ENCODE measurements at regions of chr14 and their contacts with region 1.

Region 1: DNA sequence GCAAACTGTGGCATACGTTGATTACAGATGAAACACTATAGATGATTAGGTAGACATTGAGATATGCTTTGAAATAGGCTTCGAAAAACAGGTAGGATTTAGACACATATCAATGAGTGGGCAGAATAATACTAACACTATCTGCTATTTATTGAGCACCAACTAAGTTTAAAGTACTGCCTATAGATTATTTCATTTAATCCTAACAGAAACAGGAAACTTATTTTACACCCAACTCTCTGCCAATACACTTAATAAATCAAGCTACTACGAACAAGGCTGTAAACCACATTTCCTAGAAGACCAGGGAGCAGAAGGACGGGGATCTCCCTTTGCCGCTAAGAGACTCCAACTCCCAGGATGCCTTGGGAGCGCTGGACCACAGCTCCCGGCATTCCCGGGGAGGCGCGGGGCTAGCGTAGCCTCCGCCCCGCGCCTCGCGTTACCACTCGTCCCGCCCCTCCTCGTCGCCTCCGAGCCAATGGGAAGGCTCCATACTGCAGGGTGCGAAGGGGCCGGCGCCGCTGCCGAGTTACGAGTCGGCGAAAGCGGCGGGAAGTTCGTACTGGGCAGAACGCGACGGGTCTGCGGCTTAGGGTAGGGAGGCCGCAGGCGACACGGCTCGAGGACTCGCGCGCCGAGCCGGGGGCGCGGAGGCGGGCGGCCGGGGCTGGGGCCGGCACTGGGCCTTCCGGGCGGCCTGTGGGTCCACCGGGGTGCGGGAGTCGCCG is at the start of gene VRK1:
- DNase-seq: peak; percentile 92
- ATAC-seq: peak; percentile 98
- H3K4me3 Mint-ChIP-seq: peak within 1 kb of the TSS; percentile 87
- H3K27ac Mint-ChIP-seq: peak within 1 kb of the TSS; percentile 74
- H3K4me1 Mint-ChIP-seq: peaks cover 24% of the 10 kb centered on the region
- H3K27me3 Mint-ChIP-seq: peaks cover 18% of the 10 kb centered on the region
- CTCF ChIP-seq: no peak
- total RNA-seq, gene VRK1: 30.2 and 32.1 TPM in 2 replicates

Region 2: DNA sequence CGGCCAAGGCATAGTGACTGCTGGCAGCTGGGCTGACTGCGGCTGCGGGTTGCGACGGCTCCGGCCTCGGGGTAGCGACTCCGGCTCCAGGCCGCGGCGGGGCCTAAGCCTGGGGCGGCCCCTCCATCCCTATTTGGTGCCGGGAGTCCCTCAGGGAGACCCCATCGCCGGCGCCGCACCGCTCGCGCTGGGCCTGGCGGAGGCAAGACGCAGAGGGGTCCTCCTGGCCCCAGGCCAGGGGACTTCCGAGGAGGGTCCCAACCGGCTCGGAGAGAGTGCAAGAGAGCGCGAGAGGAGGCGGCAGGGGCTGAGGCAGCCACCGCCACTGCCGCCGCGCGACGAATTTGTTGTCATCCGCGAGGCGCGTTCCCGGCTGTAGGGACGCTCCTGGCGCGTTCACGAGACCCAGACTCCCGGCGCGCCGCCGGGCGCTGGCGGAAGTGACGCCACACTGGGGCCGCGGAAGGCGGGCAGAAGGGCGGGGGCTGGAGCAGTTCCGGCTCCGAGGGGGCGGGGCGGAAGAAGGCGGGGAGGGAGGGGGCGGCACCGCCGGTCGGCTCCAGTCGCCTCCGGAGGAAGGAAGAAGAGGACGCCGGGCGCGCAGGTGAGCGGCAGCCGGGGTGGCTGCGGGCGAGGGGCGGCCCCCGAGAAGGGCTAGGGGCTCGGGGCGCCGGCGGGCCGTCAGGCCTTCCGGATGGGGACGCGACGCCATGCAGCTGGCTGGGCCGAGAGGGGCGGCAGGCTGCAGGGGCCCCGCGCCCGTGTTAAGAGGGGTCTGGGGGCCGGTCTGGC is 433.9 kb before region 1 on chr14 and contains the starts of genes ATG2B and GSKIP:
- CTCF ChIA-PET with region 1: no interaction called
- POLR2A ChIA-PET with region 1: no interaction called
- intact Hi-C with region 1: loop called (anchors 1 kb)
- DNase-seq: peak; percentile 97
- ATAC-seq: peak; percentile 85
- H3K4me3 Mint-ChIP-seq: peak within 1 kb of the TSS; percentile 89
- H3K27ac Mint-ChIP-seq: peak within 1 kb of the TSS; percentile 63
- H3K4me1 Mint-ChIP-seq: peaks cover 40% of the 10 kb centered on the region
- H3K27me3 Mint-ChIP-seq: no peaks in the 10 kb centered on the region
- CTCF ChIP-seq: no peak
- total RNA-seq, gene ATG2B: 19.4 and 21.0 TPM in 2 replicates
- total RNA-seq, gene GSKIP: 11.4 and 15.3 TPM in 2 replicates

Region 3: GRCh38 chr14:96391293-96392118 is 405.5 kb before region 1 on chr14:
- CTCF ChIA-PET with region 1: no interaction called
- POLR2A ChIA-PET with region 1: no interaction called
- intact Hi-C with region 1: loop called (anchors 1 kb)
- DNase-seq: peak; percentile 100
- ATAC-seq: peak; percentile 93
- H3K4me3 Mint-ChIP-seq: peak overlapping the region; percentile 91
- H3K27ac Mint-ChIP-seq: peak overlapping the region; percentile 88
- H3K4me1 Mint-ChIP-seq: peaks cover 6% of the 10 kb centered on the region
- H3K27me3 Mint-ChIP-seq: peaks cover 3% of the 10 kb centered on the region
- CTCF ChIP-seq: no peak

Region 4: GRCh38 chr14:96598332-96598928 is 198.6 kb before region 1 on chr14:
- CTCF ChIA-PET with region 1: no interaction called
- POLR2A ChIA-PET with region 1: no interaction called
- intact Hi-C with region 1: no loop called
- DNase-seq: no peak
- ATAC-seq: no peak
- H3K4me3 Mint-ChIP-seq: no peak overlapping the region
- H3K27ac Mint-ChIP-seq: no peak overlapping the region
- H3K4me1 Mint-ChIP-seq: no peaks in the 10 kb centered on the region
- H3K27me3 Mint-ChIP-seq: peaks cover 16% of the 10 kb centered on the region
- CTCF ChIP-seq: no peak

Region 5: GRCh38 chr14:96762650-96763049 is 34.4 kb before region 1 on chr14:
- CTCF ChIA-PET with region 1: no interaction called
- POLR2A ChIA-PET with region 1: interaction called, 3 read pairs
- intact Hi-C with region 1: loop called (anchors 1 kb)
- DNase-seq: no peak
- ATAC-seq: peak; percentile 97
- H3K4me3 Mint-ChIP-seq: peak overlapping the region; percentile 69
- H3K27ac Mint-ChIP-seq: no peak overlapping the region
- H3K4me1 Mint-ChIP-seq: peaks cover 5% of the 10 kb centered on the region
- H3K27me3 Mint-ChIP-seq: peaks cover 6% of the 10 kb centered on the region
- CTCF ChIP-seq: no peak

Region 6: GRCh38 chr14:96811985-96812667 is 15.1 kb after region 1 on chr14:
- CTCF ChIA-PET with region 1: no interaction called
- POLR2A ChIA-PET with region 1: interaction called, 3 read pairs
- intact Hi-C with region 1: loop called (anchors 2 kb)
- DNase-seq: no peak
- ATAC-seq: no peak
- H3K4me3 Mint-ChIP-seq: no peak overlapping the region
- H3K27ac Mint-ChIP-seq: no peak overlapping the region
- H3K4me1 Mint-ChIP-seq: peaks cover 28% of the 10 kb centered on the region
- H3K27me3 Mint-ChIP-seq: no peaks in the 10 kb centered on the region
- CTCF ChIP-seq: no peak

Region 7: DNA sequence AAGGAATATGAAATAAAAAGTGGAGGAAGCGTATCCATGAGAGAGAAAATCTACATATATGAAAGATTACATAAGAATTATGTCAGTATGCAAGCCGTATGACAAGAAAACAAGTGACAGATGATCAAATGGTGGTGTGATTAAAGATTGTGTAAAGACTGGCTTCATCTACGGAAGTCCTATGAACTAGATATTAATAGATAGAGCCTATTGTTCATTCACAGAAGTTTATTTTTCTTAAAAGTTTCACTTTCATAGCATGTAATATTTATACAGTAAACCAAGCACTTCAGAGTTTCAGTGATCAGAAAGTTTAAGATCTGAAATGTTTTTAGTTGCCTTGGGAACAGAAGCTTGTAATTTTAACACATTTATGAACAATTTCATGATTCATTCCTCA is 84.7 kb after region 1 on chr14:
- CTCF ChIA-PET with region 1: no interaction called
- POLR2A ChIA-PET with region 1: no interaction called
- intact Hi-C with region 1: no loop called
- DNase-seq: no peak
- ATAC-seq: no peak
- H3K4me3 Mint-ChIP-seq: no peak overlapping the region
- H3K27ac Mint-ChIP-seq: no peak overlapping the region
- H3K4me1 Mint-ChIP-seq: no peaks in the 10 kb centered on the region
- H3K27me3 Mint-ChIP-seq: no peaks in the 10 kb centered on the region
- CTCF ChIP-seq: no peak